ENCODE measurements at regions of chr3 and their contacts with region 1.

Region 1: DNA sequence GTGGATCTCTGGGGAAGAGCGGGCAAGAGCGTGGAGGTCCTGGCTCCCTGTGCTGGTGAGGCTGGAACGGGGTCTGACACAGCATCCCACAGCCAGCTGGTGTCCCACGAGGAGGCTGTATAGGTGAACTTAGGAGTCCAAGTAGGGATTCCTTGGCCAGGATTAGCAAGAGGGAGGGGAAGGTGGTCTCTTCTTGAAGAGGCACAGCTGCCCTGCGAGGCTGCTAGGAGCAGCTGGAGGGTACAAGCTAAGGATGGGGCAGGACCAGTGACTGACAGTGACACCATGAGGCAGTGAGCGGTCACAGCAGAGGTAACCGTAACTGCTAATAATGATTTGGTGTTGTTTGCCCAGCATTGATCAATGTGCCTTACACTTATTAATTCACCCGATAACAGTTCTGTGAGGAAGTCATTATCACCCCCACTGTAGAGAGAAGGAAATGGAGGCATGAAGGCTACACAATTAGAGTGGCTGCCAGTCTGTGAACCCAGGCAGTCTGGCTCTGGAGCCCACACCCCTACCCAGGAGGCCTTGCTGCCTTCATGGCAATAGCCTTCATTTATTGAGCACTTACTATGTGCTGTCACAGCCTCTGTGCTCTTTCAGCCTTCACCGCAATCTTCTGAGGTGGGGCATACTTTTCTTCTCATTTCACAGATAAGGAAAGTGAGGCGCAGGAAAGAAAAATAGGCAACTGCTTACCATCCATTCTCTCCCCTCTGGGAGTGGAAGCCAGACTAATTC is 59.4 kb downstream of the TMEM44 start:
- DNase-seq: peak; percentile 86
- CTCF ChIP-seq: peak; percentile 72

Region 2: DNA sequence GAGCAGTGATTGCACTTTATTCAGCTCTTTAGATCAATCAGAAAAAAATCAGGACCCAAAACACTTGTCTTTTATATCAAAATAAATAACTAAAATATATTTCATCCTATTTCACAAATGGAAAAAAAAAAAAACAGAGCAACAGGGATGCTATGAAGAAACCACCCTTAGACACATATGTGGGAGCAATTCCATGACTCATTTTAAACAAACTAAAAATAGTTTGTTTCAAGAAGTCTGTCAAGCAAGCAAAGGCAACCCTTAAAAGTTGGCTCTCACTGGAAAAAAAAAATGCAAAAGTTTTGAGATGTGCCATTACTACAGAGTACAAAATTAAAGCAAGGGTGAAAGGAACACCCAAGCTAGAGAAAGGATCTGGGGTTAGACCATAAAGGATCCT is 92.8 kb before region 1 on chr3:
- in situ Hi-C with region 1: loop called (anchors 5 kb)
- DNase-seq: no peak
- CTCF ChIP-seq: no peak

Measured in GM13976 (cell line).